CD4-positive, alpha-beta T cell (primary cell): ENCODE measurements at regions of chr6 and their contacts with region 1.

Region 1: DNA sequence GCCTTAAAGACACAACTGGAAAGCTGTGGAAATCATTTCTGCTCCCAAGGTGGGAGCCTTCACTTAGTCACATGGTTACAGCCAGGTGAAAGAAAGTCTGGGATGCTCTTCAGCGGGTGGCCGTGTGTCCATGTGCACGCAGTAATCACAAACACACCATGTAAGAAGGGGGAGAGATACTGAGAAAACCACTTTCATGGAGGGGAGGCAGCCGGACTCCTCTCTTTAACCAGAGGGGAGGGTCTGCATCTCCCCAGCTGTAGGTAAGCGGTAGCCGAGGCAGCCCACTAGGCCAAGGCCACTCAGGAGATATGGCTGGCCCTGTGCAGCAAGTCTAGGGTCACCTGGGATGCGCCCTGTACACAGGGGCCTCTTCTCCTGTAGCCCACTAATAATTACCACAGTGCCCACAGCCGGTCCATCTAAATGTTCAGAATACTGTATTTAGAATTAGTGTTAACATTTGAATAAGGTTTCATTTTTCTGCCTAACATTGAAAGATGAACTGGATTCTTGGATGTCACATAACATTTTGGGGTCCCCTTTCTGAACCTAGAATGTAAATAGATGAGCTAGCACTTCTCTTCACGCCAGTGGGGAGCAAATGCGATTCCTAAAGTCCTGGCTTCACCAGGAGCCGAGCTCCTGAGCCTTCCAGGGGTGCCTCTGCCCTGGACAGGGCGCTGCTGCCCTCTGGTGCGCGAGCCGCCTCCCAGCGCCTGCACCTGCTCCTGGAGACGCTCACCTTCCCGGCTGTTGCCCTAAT is 15.9 kb downstream of the GPR31 start:
- DNase-seq: peak; percentile 14 to 79 (median 54)
- ATAC-seq: peak; percentile 84
- H3K4me3 ChIP-seq: no peak overlapping the region
- H3K4me3 Mint-ChIP-seq: no peak overlapping the region
- H3K27ac ChIP-seq: no peak overlapping the region
- H3K27ac Mint-ChIP-seq: peak overlapping the region; percentile 12
- H3K4me1 ChIP-seq: peaks cover 19% of the 10 kb centered on the region
- H3K4me1 Mint-ChIP-seq: peaks cover 41% of the 10 kb centered on the region
- H3K27me3 ChIP-seq: no peaks in the 10 kb centered on the region
- H3K27me3 Mint-ChIP-seq: peaks cover 6% of the 10 kb centered on the region
- CTCF ChIP-seq: peak; percentile 90

Region 2: DNA sequence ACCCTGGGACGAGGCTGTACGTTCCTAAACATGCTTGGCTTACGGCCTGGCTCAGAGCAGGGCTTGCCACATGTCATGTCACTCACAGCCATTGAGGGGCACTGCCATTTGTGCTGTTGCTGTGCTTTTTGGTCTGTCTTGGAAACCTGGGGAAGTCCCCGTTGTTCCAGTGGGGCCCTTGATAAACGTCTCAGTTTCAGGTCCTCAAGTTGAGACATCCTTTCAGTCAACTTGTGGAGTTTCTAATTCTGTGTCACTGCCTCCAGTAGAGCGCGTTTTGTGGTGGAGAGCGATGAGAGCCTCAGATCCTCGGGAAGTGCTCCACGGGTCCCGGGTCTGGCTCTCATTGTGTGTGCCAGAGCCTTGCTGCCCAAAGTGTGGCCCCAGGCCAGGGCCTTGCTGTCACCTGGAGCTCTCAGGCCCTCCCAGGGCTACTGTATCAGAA is 62.0 kb before region 1 on chr6:
- CTCF ChIA-PET with region 1: no interaction called
- POLR2A ChIA-PET with region 1: no interaction called
- intact Hi-C with region 1: loop called in 1 of 2 experiments (anchors 5 kb)
- DNase-seq: peak in 10 of 14 experiments; percentile 26 to 88 (median 46)
- ATAC-seq: peak; percentile 99
- H3K4me3 ChIP-seq: peak overlapping the region; percentile 14
- H3K4me3 Mint-ChIP-seq: peak overlapping the region; percentile 42
- H3K27ac ChIP-seq: no peak overlapping the region
- H3K27ac Mint-ChIP-seq: peak overlapping the region; percentile 64
- H3K4me1 ChIP-seq: peaks cover 17% of the 10 kb centered on the region
- H3K4me1 Mint-ChIP-seq: peaks cover 23% of the 10 kb centered on the region
- H3K27me3 ChIP-seq: peaks cover 0 to 3% of the 10 kb centered on the region in 2 experiments
- H3K27me3 Mint-ChIP-seq: no peaks in the 10 kb centered on the region
- CTCF ChIP-seq: no peak